Activated CD4-positive, alpha-beta T cell treated with anti-CD3 and anti-CD28 coated beads, Interleukin-2, amount 10 ng/mL, durations not matched to agents 24 days and 14 days (primary cell): ENCODE measurements at regions of chr2 and their contacts with region 1.

Region 1: DNA sequence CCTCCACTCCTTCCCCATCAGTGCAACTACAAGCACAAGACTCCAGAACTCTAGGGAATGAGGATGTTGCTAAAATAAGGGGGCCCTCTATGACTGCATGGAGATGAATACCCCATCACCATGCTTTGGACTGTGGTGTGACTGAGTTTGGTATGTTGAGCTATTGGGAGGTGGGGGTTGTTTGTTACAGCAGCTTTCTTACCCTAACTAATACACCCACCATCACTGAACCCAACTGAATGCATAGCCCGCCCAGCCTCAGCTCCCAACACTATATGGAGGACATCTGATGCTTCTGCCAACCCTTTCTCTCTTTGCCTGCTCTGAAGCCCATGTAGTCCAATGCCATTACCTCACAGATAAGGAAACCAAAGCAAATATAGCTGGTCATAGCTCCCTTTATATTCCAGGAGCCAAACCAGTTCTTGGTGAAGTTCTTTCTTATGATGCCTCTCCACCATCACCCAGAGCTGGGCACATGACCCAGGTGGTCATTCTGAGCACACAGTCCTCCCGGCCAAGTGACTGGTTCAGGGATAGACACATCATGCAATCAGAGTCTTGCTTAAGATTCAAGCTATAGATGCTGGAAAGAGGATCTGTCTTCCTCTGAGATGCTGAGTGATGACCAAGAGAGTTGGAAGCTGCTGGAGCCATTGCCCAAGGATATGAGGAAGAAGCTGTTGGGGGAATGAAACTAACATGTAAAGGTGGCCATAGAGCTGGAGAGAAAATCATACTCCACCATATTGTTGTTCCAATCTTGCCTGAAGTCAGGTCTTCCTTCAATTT is 155.6 kb upstream of the HAAO start:
- DNase-seq: no peak
- H3K4me3 Mint-ChIP-seq: no peak overlapping the region
- H3K27ac Mint-ChIP-seq: no peak overlapping the region
- H3K4me1 Mint-ChIP-seq: peaks cover 3% of the 10 kb centered on the region
- H3K27me3 Mint-ChIP-seq: peaks cover 3% of the 10 kb centered on the region

Region 2: DNA sequence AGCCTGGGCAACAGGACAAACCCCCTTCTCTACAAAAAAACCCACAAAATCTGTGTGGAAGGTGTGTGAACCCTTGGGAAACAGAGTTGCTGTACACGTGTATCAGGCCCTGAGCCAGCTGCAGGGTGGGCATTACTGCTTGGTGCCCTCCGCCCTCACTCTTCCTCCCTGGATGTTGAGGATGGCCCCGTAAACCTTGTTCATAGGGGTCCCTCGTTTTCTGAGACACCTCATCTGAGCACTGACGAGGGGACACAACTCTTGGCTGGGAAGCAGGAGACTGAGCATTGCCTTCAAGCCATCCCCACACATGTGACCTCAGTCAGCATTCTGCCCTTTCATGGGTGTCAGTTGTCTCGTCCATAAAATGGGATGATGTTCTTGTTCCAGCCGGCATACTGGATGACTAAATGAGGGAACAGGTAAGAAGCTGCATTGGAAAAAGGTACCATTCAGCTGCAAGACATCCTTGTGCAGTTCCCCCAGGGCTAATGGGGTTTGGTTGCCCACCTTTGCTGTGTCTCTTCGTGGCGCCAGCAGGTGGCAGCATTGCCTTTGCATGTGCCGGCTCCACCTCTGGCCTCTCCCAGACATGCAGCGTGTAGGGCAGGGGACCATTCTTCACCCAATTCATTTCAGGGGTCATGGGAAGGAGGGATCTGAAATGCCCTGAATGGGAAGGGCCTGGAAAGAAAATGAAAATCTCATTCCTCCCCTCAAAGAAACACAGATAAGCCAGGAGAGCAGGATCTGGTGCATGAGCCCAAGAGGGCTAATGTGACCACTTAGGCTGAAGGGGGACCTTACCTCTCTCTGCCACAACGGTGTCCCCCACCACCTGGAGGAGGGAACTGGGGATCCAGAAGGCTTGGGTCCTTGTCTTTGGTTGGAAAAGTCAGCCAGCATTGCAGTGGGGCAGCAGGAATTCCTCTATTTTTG is 119.2 kb before region 1 on chr2:
- intact Hi-C with region 1: loop called (anchors 2 kb)
- DNase-seq: peak; percentile 91
- H3K4me3 Mint-ChIP-seq: no peak overlapping the region
- H3K27ac Mint-ChIP-seq: no peak overlapping the region
- H3K4me1 Mint-ChIP-seq: peaks cover 7% of the 10 kb centered on the region
- H3K27me3 Mint-ChIP-seq: peaks cover 13% of the 10 kb centered on the region

Region 3: DNA sequence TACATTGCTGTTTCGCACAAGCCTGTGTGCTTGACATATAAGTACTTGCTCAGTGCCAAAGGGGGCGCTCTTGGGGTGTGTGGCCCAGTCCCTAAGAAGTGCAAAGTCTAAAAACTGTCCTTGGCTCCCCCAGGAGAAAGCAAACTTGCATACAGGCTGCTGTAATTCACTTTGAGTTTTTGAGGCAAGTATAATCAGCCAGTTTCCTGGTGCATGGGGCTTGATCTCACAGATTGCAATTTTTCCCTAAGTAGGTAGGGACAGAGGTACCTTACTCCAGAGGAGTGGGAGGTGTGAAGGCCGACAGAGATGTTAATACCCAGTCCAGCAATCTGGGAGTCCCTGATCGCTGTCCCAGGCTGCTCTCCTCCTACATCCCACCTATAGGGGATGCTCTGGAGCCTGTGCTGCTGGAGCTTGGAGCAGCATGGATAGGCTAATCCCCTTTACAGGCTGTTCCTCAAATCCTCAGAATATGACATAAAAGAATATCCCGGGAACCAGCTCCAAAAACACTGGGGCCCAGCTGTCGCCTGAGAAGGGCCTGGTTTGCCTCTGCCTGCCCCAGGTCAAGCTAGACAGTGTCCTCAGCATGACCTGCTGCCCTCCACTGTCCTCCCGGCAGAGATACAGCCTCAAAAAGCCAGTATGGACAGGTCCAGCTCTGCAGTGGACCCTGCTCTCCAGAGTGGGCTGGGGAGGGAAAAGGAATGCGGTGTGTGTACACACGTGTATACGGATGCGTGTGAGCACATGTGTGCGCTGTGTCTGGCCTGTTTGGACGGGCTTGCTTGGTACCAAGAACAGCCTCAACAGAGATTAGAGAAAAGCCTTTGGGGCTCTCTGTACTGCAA is 19.1 kb before region 1 on chr2:
- intact Hi-C with region 1: no loop called
- DNase-seq: no peak
- H3K4me3 Mint-ChIP-seq: no peak overlapping the region
- H3K27ac Mint-ChIP-seq: no peak overlapping the region
- H3K4me1 Mint-ChIP-seq: no peaks in the 10 kb centered on the region
- H3K27me3 Mint-ChIP-seq: no peaks in the 10 kb centered on the region

Region 4: GRCh38 chr2:43024515-43025011 is 76.6 kb after region 1 on chr2:
- intact Hi-C with region 1: no loop called
- DNase-seq: peak; percentile 72
- H3K4me3 Mint-ChIP-seq: no peak overlapping the region
- H3K27ac Mint-ChIP-seq: no peak overlapping the region
- H3K4me1 Mint-ChIP-seq: peaks cover 7% of the 10 kb centered on the region
- H3K27me3 Mint-ChIP-seq: no peaks in the 10 kb centered on the region

Region 5: DNA sequence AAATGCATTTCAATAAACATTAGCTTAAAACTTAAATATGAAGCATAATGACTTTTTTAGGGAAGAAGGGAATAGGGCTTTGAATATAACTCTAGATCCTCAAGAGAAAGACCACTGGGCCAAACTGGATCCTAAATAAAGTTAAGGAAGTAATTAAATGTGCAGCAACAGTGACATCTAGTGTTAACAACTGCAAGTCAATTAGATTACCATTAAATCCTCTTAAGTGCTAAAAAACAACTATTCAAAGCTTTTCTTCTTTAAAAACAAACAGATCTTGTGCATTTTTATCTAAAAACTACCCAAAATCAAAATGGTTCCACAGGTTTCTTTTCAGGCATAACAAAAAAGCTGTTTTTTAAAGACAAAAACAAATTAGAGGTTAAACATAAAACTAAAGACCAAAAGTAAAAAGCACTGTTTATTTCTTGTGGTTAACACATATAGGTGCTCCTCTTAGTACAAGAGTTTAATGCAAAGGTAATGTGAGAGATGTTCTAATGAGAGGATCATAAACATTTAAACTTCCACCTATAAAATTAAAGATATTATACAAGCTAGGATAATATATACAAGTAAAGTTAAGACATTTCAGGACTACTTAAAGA is 536.4 kb after region 1 on chr2:
- intact Hi-C with region 1: loop called (anchors 2 kb)
- DNase-seq: peak; percentile 65
- H3K4me3 Mint-ChIP-seq: no peak overlapping the region
- H3K27ac Mint-ChIP-seq: no peak overlapping the region
- H3K4me1 Mint-ChIP-seq: peaks cover 8% of the 10 kb centered on the region
- H3K27me3 Mint-ChIP-seq: no peaks in the 10 kb centered on the region

Region 6: DNA sequence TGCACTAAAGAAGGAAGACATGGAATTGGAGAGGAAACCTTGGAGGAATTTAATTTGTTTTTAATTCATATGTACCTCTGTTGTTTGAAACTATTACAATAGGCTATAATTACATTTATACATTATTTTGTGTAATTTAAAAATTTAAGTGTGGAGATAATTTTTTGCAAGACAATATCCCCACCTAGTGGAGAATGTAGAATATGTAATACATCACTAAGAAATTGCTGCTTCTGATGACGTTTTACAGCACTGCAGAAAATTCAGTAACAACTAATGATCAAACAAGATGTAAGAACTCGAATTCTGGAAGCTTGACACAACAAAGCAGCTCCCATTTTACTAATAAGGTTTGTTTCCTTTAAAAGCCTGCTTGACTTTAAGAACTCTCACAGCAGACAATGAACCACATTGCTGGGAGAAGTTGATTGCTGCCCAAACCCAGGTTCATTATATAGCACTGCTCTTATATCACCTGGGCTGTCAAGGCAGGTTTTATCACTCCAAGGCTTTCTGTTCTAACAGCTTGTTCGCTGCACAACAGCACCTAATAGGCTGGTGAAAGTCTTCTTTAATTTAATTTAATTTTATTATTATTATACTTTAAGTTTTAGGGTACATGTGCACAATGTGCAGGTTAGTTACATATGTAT is 594.4 kb after region 1 on chr2:
- intact Hi-C with region 1: loop called (anchors 2 kb)
- DNase-seq: peak; percentile 56
- H3K4me3 Mint-ChIP-seq: no peak overlapping the region
- H3K27ac Mint-ChIP-seq: no peak overlapping the region
- H3K4me1 Mint-ChIP-seq: peaks cover 8% of the 10 kb centered on the region
- H3K27me3 Mint-ChIP-seq: no peaks in the 10 kb centered on the region

Region 7: DNA sequence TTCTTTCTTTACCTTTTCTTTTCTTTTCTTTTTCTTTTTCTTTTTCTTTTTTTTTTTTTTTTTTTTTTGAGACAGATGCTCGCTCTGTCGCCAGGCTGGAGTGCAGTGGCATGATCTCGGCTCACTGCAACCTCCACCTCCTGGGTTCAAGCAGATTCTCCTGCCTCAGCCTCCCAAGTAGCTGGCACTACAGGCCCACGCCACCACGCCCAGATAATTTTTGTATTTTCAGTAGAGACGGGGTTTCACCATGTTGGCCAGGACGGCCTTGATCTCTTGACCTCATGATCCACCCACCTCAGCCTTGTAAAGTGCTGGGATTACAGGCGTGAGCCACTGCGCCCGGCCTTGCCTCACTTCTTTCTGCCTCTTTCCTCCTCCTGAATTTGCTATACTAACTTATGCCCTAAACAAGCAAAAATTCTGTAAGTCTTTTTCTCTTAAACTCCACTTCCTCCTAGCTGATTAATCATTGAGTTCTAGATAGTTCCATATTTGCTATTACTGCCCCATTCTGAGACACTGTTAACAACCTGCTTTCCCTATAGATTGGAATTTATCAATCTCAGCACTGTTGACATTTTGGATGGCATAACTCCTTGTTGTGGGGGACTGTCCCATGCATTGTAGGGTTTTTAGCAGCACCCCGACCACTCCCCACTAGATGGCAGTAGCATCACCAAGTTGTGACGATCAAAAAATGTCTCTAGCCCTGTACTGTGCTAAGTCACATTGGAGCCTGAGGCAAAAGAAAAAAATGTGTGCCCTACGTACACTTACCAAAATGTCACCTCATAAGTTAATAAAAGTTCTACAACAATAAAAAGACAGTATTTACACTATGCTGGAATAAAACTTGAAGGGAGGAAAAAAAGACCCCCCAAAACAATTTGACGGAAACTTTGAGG is 664.2 kb after region 1 on chr2:
- intact Hi-C with region 1: loop called (anchors 1 kb)
- DNase-seq: peak; percentile 91
- H3K4me3 Mint-ChIP-seq: no peak overlapping the region
- H3K27ac Mint-ChIP-seq: no peak overlapping the region
- H3K4me1 Mint-ChIP-seq: peaks cover 2% of the 10 kb centered on the region
- H3K27me3 Mint-ChIP-seq: peaks cover 4% of the 10 kb centered on the region